ENCODE measurements at regions of chr22 and their contacts with region 1.

Region 1: GRCh38 chr22:50525390-50526068 is at the start of gene SCO2:
- DNase-seq: peak; percentile 98
- H3K4me3 Mint-ChIP-seq: peak within 1 kb of the TSS; percentile 86
- H3K27ac Mint-ChIP-seq: peak within 1 kb of the TSS; percentile 89
- H3K4me1 Mint-ChIP-seq: peaks cover 43% of the 10 kb centered on the region
- H3K27me3 Mint-ChIP-seq: no peaks in the 10 kb centered on the region
- total RNA-seq, gene SCO2: 6.4 to 7.0 TPM

Region 2: GRCh38 chr22:50190182-50190940 is 335.2 kb before region 1 on chr22:
- CTCF ChIA-PET with region 1: interaction called, 7 read pairs
- POLR2A ChIA-PET with region 1: interaction called, 15 read pairs
- DNase-seq: peak; percentile 87
- H3K4me3 Mint-ChIP-seq: peak overlapping the region; percentile 79
- H3K27ac Mint-ChIP-seq: peak overlapping the region; percentile 95
- H3K4me1 Mint-ChIP-seq: peaks cover 57% of the 10 kb centered on the region
- H3K27me3 Mint-ChIP-seq: no peaks in the 10 kb centered on the region

Region 3: DNA sequence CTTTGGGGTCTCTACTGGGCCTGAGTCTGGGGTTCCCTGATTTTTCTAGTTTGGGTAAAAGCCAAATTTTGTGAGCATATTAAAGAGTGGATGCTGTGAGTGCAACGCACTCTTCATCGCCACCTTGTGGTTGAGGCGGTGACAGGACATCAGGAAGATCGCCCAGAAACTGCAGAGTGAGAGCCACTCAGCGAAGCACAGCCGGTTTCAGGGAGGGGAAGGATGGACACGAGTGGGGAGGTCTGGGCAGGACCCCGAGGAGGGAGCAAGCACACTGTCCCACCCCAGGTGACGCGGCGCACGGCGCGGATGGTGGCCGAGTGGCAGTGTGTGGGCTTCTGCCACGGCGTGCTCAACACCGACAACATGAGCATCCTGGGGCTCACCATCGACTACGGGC is 315.6 kb before region 1 on chr22:
- CTCF ChIA-PET with region 1: no interaction called
- POLR2A ChIA-PET with region 1: no interaction called
- DNase-seq: peak; percentile 78
- H3K4me3 Mint-ChIP-seq: no peak overlapping the region
- H3K27ac Mint-ChIP-seq: peak overlapping the region; percentile 1
- H3K4me1 Mint-ChIP-seq: peaks cover 8% of the 10 kb centered on the region
- H3K27me3 Mint-ChIP-seq: no peaks in the 10 kb centered on the region

Region 4: GRCh38 chr22:50469377-50470305 is 55.9 kb before region 1 on chr22:
- CTCF ChIA-PET with region 1: interaction called, 21 read pairs
- POLR2A ChIA-PET with region 1: interaction called, 48 read pairs
- DNase-seq: peak; percentile 99
- H3K4me3 Mint-ChIP-seq: peak overlapping the region; percentile 68
- H3K27ac Mint-ChIP-seq: peak overlapping the region; percentile 97
- H3K4me1 Mint-ChIP-seq: peaks cover 67% of the 10 kb centered on the region
- H3K27me3 Mint-ChIP-seq: no peaks in the 10 kb centered on the region

Region 5: GRCh38 chr22:50498322-50498890 is 27.1 kb before region 1 on chr22:
- CTCF ChIA-PET with region 1: interaction called, 12 read pairs
- POLR2A ChIA-PET with region 1: interaction called, 17 read pairs
- DNase-seq: peak; percentile 78
- H3K4me3 Mint-ChIP-seq: no peak overlapping the region
- H3K27ac Mint-ChIP-seq: no peak overlapping the region
- H3K4me1 Mint-ChIP-seq: peaks cover 2% of the 10 kb centered on the region
- H3K27me3 Mint-ChIP-seq: no peaks in the 10 kb centered on the region

Region 6: DNA sequence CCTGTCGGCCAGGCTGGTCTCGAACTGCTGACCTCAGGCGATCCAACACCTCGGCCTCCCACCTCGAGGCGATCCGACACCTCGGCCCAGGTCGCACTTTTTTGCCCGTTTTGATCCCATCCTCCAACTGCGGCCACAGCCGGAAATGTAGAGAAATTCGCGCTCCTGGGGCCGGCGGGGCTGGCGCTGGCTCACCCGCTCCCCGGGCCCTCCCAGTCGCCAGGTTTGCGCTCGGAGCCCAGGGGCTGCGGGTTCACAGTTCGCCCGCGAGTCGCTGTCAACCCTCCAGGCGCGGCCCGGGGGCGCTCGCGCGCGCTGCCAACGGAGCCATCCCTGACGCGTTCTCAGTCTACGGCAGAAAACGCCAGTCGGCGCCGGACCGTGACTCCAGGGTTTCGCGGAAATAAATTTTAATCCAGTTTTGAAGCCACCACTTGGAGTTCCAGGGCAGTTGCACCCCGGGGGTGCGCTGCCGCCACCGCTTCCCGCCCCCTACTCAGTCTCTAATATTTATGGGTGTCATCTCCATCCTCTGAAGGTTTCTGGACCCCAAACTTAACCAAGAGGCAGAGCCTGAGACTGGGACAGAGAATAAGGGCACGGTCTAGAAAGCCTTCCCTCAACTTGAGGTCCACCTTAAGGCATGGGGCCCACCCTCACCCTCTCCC is 18.7 kb after region 1 on chr22:
- CTCF ChIA-PET with region 1: interaction called, 150 read pairs
- POLR2A ChIA-PET with region 1: interaction called, 583 read pairs
- DNase-seq: peak; percentile 90
- H3K4me3 Mint-ChIP-seq: peak overlapping the region; percentile 63
- H3K27ac Mint-ChIP-seq: peak overlapping the region; percentile 75
- H3K4me1 Mint-ChIP-seq: peaks cover 63% of the 10 kb centered on the region
- H3K27me3 Mint-ChIP-seq: no peaks in the 10 kb centered on the region

Region 7: GRCh38 chr22:50562523-50563412 is 37.2 kb after region 1 on chr22 and contains the start of gene SYCE3:
- CTCF ChIA-PET with region 1: interaction called, 42 read pairs
- POLR2A ChIA-PET with region 1: interaction called, 109 read pairs
- DNase-seq: peak; percentile 98
- H3K4me3 Mint-ChIP-seq: peak within 1 kb of the TSS; percentile 77
- H3K27ac Mint-ChIP-seq: peak within 1 kb of the TSS; percentile 48
- H3K4me1 Mint-ChIP-seq: peaks cover 26% of the 10 kb centered on the region
- H3K27me3 Mint-ChIP-seq: peaks cover 25% of the 10 kb centered on the region
- total RNA-seq, gene SYCE3: 0.58 to 0.71 TPM

Region 8: GRCh38 chr22:50627642-50628542 is 102.4 kb after region 1 on chr22 and contains the start of gene ARSA:
- CTCF ChIA-PET with region 1: interaction called, 76 read pairs
- POLR2A ChIA-PET with region 1: interaction called, 117 read pairs
- DNase-seq: peak; percentile 87
- H3K4me3 Mint-ChIP-seq: peak within 1 kb of the TSS; percentile 85
- H3K27ac Mint-ChIP-seq: peak within 1 kb of the TSS; percentile 79
- H3K4me1 Mint-ChIP-seq: peaks cover 17% of the 10 kb centered on the region
- H3K27me3 Mint-ChIP-seq: peaks cover 5% of the 10 kb centered on the region
- total RNA-seq, gene ARSA: 63.1 to 65.0 TPM